ENCODE measurements at regions of chr20 and their contacts with region 1.

Region 1: GRCh38 chr20:39081255-39081654 is 119.1 kb downstream of the DHX35 start:
- DNase-seq: peak; percentile 52 to 74 (median 70)
- ATAC-seq: peak; percentile 42 to 73 (median 70)
- H3K4me3 ChIP-seq: no peak overlapping the region
- H3K27ac ChIP-seq: no peak overlapping the region
- H3K4me1 ChIP-seq: no peaks in the 10 kb centered on the region
- H3K27me3 ChIP-seq: peaks cover 0 to 17% (median 6%) of the 10 kb centered on the region in 9 donors
- CTCF ChIP-seq: peak; percentile 82 to 96 (median 92)
- POLR2A ChIP-seq: no peak

Region 2: DNA sequence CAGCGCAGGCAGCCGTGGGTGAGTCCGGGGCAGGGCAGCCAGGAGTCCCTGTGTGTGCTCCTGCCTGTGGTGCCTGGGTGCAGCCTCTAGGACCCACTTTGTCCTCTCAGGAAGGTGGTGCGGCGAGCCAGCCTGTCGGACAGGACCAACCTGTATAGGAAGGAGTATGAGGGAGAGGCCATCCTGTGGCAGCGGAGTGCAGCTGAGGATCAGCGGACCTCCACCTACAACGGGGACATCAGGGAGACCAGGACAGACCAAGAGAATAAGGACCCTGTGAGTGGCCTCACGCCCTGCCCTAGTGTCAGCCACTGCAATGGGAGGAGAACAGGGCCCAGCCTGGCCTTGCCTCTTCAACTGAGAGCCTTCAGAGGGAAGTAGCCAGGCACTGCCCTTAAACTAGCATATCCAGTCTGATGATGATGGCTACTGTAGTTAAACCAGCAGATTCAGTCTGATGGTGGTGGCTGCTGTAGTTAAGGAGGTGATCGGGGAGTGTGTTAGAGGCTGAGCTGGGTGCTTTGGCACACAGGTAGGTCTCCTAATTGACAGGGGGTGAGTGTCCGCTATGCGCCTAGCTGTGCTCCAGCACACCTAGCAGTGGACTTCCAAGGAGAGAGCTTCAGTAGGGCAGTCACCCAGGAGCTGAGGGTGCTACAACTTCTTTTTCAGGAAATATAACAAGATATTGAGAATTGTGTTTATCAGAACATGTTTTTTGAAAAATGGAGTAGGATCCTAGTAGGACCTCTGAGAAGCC is 173.2 kb before region 1 on chr20:
- intact Hi-C with region 1: no loop called
- DNase-seq: no peak
- ATAC-seq: peak in 1 of 4 donors; percentile 34
- H3K4me3 ChIP-seq: no peak overlapping the region
- H3K27ac ChIP-seq: no peak overlapping the region
- H3K4me1 ChIP-seq: no peaks in the 10 kb centered on the region
- H3K27me3 ChIP-seq: no peaks in the 10 kb centered on the region
- CTCF ChIP-seq: no peak
- POLR2A ChIP-seq: no peak

Region 3: DNA sequence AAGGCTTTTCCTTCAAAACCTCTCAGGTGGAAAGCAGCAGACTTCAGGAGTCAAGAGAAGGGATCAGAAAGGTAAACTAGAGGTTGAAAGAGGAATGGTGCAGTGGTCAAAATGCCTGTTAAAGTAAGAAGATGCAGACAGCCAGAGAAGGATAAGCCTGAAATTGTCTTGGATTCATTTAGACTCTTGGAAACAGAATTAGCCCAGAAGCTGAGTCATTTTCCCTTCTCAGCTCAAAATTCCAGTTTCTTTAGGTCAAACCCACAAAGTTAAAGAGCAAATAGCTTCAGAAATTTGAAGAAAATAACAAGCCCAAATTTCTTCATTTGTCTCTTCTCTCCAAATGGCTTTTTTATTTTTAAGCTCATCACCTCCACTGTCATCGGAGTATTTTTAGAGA is 45.2 kb before region 1 on chr20:
- intact Hi-C with region 1: no loop called
- DNase-seq: no peak
- ATAC-seq: no peak
- H3K4me3 ChIP-seq: no peak overlapping the region
- H3K27ac ChIP-seq: peak overlapping the region in 1 of 12 donors; percentile 78
- H3K4me1 ChIP-seq: no peaks in the 10 kb centered on the region
- H3K27me3 ChIP-seq: no peaks in the 10 kb centered on the region
- CTCF ChIP-seq: no peak
- POLR2A ChIP-seq: no peak

Region 4: DNA sequence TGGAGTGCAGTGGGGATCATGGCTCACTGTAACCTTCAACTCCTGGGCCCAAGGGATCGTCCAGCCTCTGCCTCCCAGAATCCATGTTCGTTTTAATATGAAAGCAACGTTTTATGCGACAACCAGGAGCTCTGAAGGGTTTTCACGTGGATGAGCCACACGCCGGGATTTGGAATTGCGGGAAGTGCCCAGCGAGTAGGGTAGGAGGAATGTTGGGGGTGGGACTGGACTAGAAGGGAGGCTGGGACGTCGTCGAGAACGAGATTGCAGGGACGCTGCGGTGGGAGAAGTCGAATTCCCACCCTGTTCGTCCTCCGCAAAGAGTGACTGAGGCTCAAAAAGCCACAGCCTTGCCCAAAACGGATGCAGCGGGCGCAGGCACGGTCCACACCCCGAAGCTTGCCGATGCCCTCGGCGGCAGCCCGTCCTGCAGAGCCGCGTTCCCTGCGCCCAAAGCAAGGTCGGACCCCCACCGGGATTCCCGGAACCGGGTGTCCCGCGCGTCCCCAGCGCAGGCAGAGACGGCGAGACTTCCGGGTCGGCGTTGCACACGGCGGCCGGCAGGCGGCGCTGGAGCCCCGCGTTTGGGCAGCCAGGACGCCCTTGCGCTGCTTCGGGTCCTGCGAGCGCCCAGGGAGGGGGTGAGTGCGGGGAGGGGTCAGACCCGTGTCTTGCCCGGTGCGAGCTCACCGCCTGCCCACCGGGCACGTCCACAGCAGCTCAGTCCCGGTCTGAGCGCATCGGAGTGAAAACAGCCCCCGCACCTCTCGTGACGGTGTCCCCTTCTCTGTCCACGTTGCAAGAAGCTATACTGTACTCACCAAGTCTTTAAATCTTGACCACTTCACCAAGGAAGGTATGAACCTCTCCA is 31.3 kb before region 1 on chr20:
- intact Hi-C with region 1: loop called in 9 of 10 experiments (anchors 1 to 2 kb)
- DNase-seq: peak; percentile 71 to 89 (median 78)
- ATAC-seq: peak; percentile 44 to 89 (median 85)
- H3K4me3 ChIP-seq: peak overlapping the region; percentile 44 to 85 (median 69)
- H3K27ac ChIP-seq: peak overlapping the region in 7 of 12 donors; percentile 1 to 61 (median 43)
- H3K4me1 ChIP-seq: peaks cover 0 to 13% (median 5%) of the 10 kb centered on the region in 12 donors
- H3K27me3 ChIP-seq: peaks cover 0 to 4% (median 0%) of the 10 kb centered on the region in 9 donors
- CTCF ChIP-seq: peak; percentile 96 to 99 (median 98)
- POLR2A ChIP-seq: no peak

Region 5: GRCh38 chr20:39066471-39067242 is 14.6 kb before region 1 on chr20:
- intact Hi-C with region 1: loop called in 1 of 10 experiments (anchors 1 kb)
- DNase-seq: no peak
- ATAC-seq: no peak
- H3K4me3 ChIP-seq: no peak overlapping the region
- H3K27ac ChIP-seq: no peak overlapping the region
- H3K4me1 ChIP-seq: no peaks in the 10 kb centered on the region
- H3K27me3 ChIP-seq: peaks cover 0 to 23% (median 0%) of the 10 kb centered on the region in 9 donors
- CTCF ChIP-seq: no peak
- POLR2A ChIP-seq: no peak

Measured in heart left ventricle (tissue), 16 donors.